ENCODE measurements at regions of chr3 and their contacts with region 1.

Region 1: DNA sequence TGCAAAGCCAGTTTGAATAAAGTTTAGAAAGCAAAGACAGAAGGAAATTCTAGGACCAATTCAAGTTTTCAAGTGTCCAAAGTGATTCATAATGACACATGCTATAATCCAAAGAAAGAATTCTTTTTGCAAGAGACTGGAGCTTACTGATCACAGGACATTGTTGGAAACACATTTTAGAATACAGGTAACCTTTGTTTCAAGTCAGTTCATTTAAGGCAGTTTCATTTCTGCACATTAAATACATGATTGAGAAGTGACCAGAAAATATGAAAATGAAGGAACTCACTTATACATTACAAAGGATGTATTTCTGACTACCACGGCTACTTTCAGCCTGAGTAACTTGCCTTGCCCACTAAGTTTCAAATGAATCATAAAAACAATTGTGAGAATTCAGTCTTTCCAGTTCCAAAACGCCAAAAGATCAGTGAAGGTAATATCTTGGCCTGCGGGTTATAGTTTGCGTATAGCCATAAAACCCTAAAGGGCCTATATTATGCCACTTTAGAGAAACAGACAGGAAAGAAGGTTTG is 48.7 kb downstream of the PRICKLE2 start:
- DNase-seq: no peak
- ATAC-seq: no peak
- H3K4me3 ChIP-seq: no peak overlapping the region
- H3K27ac ChIP-seq: no peak overlapping the region
- H3K4me1 ChIP-seq: peaks cover 0 to 18% (median 0%) of the 10 kb centered on the region in 9 donors
- H3K27me3 ChIP-seq: no peaks in the 10 kb centered on the region
- CTCF ChIP-seq: no peak

Region 2: DNA sequence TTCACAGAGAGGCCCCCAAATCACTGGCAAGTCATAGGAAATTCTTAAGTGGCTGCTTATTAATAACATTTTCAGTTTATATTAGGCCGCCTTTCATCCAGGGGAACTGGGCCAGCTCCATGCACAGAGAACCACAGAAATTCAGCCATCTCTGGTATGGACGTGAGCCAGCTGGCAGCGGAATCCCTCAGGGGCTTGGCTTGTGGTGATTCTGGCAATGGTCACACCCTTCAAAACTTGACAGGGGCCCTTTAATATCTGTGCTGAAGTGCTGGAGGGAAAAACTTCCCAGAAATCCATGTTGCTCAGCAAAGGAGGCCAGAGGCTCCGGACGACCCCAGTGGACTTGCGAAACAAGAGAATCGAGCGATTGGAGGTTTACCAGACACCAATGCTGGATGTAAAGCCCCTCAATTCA is 37.4 kb after region 1 on chr3:
- intact Hi-C with region 1: loop called in 1 of 10 experiments (anchors 5 kb)
- DNase-seq: peak; percentile 83
- ATAC-seq: peak; percentile 53 to 77 (median 70)
- H3K4me3 ChIP-seq: peak overlapping the region in 9 of 10 donors; percentile 9 to 42 (median 27)
- H3K27ac ChIP-seq: peak overlapping the region; percentile 26 to 87 (median 76)
- H3K4me1 ChIP-seq: peaks cover 16 to 90% (median 62%) of the 10 kb centered on the region in 9 donors
- H3K27me3 ChIP-seq: no peaks in the 10 kb centered on the region
- CTCF ChIP-seq: no peak

Region 3: DNA sequence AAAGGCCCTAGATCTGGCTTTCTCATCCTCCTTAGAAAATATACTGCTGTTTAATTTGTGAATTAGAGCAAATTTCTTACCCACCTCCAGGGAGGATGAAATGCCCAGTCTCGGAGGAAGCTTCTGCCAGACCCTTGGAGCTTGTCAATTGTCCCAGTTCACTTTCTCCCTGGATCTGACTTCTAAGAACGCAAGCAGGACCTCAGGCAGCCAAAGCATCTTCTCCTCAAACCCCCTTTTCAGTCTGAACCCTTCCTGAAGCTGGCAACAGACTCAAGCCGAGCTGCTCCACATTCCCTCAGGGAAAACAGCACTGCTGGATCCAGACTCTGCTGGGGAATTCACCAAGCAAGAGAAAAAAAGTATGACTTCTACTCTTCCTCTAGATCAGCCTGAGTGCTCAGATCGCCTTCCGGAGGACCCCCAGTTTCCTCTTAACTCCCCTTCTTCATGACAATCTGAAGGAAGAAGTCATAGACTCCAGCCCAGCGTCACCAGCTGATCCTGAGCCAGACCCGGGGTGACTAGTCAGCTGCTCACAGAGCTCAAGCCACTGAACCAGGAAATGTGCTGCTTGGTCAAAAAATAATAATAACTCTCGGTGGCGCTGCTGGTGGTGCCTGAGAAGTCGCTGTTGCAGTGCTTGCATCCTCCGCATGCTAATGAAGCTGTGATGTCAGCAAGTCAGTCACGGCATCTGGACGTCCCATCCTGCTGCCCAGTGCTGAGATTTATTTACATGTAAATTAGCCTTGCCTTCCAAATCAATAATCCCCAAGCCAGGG is 48.5 kb after region 1 on chr3 and contains the start of gene PRICKLE2:
- intact Hi-C with region 1: loop called in 1 of 10 experiments (anchors 5 kb)
- DNase-seq: peak; percentile 75 to 89
- ATAC-seq: peak; percentile 75 to 88 (median 84)
- H3K4me3 ChIP-seq: peak within 1 kb of the TSS in 9 of 10 donors; percentile 6 to 54 (median 47)
- H3K27ac ChIP-seq: peak within 1 kb of the TSS; percentile 27 to 89 (median 78)
- H3K4me1 ChIP-seq: peaks cover 11 to 80% (median 59%) of the 10 kb centered on the region in 9 donors
- H3K27me3 ChIP-seq: no peaks in the 10 kb centered on the region
- CTCF ChIP-seq: peak in 5 of 9 donors; percentile 16 to 54 (median 39)
- total RNA-seq, gene PRICKLE2: 6.4 to 12.2 (median 8.4) TPM

Region 4: DNA sequence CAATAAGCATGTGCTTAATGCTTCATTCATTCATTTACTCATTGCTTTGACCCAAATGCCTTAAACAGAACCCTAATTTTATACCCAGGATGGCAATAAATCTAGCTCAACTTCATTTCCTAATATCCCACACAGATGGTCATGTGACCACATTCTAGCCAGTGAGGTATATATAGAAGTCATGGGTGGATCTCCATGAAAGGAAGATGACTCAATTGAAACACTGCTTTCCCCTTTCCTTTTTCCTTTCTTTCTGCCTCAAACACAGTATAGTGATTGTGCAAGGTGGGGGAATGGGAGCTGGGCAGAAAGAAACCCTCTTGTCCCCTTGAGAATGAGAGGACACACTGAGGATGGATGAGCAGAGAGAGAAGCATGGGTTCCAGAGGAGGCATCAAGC is 232.2 kb after region 1 on chr3:
- intact Hi-C with region 1: no loop called
- DNase-seq: no peak
- ATAC-seq: no peak
- H3K4me3 ChIP-seq: no peak overlapping the region
- H3K27ac ChIP-seq: no peak overlapping the region
- H3K4me1 ChIP-seq: no peaks in the 10 kb centered on the region
- H3K27me3 ChIP-seq: peaks cover 0 to 7% (median 0%) of the 10 kb centered on the region in 7 donors
- CTCF ChIP-seq: no peak

Region 5: DNA sequence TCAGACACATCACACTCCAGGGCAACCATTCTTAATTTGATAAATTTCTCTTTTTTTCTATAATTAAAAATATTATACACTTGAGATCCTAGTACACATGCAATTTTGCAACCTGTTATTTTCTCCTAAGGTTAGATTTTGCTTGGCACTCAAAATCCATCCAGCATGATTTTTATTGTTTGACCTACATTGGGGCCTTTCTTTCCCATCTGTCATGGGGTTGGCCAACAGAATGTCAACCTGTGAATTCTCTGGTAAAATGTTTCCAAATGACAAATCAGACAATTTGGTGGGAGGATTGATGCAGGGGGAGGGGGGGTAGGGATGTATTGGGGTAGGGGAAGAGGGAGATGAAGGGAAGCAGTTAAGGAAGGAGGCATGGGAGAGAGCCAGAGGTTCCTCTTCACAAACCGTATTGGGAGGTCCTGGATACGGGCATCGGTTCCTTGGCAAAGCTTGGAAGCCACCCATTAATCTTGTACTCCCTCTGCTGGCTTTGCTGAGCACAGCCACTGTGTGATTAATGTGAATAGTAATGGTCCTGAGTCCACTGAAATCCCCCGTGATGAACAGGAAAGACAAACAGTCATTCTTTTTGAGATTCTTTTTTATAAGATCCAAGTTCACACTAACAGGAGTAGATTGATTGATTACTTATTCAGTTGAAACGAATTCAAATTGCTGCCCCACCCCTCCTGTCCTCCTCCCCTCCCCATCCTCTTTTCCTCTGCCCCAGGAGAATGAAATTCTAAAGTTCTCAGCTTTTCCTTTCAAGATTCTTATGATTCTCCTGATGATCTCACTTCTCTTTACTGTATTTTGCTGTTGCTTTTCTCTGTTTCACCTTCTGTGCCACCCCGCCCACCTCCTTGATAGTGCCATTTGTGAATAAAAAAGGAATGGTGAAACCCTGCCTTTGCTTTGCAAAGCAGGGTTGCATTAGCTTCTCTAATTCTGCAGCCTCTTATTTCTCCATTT is 1962.1 kb after region 1 on chr3:
- intact Hi-C with region 1: loop called in 1 of 10 experiments (anchors 5 kb)
- DNase-seq: peak in 1 of 2 donors; percentile 65
- ATAC-seq: peak; percentile 79 to 94 (median 88)
- H3K4me3 ChIP-seq: no peak overlapping the region
- H3K27ac ChIP-seq: peak overlapping the region in 3 of 10 donors; percentile 46 to 52 (median 51)
- H3K4me1 ChIP-seq: peaks cover 0 to 10% (median 9%) of the 10 kb centered on the region in 9 donors
- H3K27me3 ChIP-seq: no peaks in the 10 kb centered on the region
- CTCF ChIP-seq: peak; percentile 68 to 88 (median 82)